ENCODE measurements at regions of chr7 and their contacts with region 1.

Region 1: DNA sequence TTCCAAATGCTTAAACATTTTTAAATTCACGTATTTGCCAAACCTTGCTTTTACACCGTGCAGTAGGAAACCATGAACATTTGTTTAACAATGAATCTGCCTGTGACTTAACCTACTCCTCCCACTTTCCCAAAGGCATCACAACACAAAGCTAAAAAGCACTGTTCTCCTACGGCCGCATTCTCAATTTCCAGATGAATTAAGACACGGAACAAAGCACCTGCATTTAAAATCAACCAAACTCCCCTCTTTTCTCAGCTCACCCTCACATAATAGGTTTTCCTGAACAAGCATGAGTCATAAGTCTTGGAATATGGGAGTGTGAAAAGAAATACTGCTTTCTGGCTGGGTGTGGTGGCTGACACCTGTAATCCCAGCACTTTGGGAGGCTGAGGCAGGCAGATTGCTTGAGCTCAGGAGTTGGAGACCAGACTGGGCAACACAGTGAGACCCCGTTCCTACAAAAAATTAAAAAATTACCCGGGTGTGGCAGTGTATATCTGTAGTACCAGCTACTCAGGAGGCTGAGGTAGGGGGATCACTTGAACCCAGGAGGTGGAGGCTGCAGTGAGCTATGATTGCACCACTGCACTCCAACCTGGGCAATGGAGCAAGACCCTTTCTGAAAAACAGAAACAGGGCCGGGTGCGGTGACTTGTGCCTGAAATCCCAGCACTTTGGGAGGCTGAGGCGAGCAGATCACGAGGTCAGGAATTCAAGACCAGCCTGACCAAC is 51.7 kb upstream of the CYTH3 start:
- DNase-seq: no peak
- ATAC-seq: no peak
- H3K4me3 ChIP-seq: no peak overlapping the region
- H3K4me3 Mint-ChIP-seq: no peak overlapping the region
- H3K27ac ChIP-seq: no peak overlapping the region
- H3K27ac Mint-ChIP-seq: no peak overlapping the region
- H3K4me1 ChIP-seq: peaks cover 0 to 3% of the 10 kb centered on the region in 2 donors
- H3K4me1 Mint-ChIP-seq: peaks cover 4% of the 10 kb centered on the region
- H3K27me3 ChIP-seq: no peaks in the 10 kb centered on the region
- H3K27me3 Mint-ChIP-seq: no peaks in the 10 kb centered on the region
- CTCF ChIP-seq: no peak

Region 2: GRCh38 chr7:5854738-5855137 is 469.4 kb before region 1 on chr7:
- CTCF ChIA-PET with region 1: interaction called, 10 read pairs
- POLR2A ChIA-PET with region 1: no interaction called
- intact Hi-C with region 1: no loop called
- DNase-seq: no peak
- ATAC-seq: no peak
- H3K4me3 ChIP-seq: no peak overlapping the region
- H3K4me3 Mint-ChIP-seq: no peak overlapping the region
- H3K27ac ChIP-seq: no peak overlapping the region
- H3K27ac Mint-ChIP-seq: no peak overlapping the region
- H3K4me1 ChIP-seq: peaks cover 0 to 5% of the 10 kb centered on the region in 2 donors
- H3K4me1 Mint-ChIP-seq: peaks cover 3% of the 10 kb centered on the region
- H3K27me3 ChIP-seq: no peaks in the 10 kb centered on the region
- H3K27me3 Mint-ChIP-seq: no peaks in the 10 kb centered on the region
- CTCF ChIP-seq: no peak

Region 3: GRCh38 chr7:6106140-6106904 is 217.8 kb before region 1 on chr7:
- CTCF ChIA-PET with region 1: interaction called, 7 read pairs
- POLR2A ChIA-PET with region 1: no interaction called
- intact Hi-C with region 1: loop called (anchors 2 kb)
- DNase-seq: peak; percentile 51
- ATAC-seq: no peak
- H3K4me3 ChIP-seq: peak overlapping the region; percentile 58 to 76 (median 70)
- H3K4me3 Mint-ChIP-seq: peak overlapping the region; percentile 88
- H3K27ac ChIP-seq: peak overlapping the region; percentile 60 to 71
- H3K27ac Mint-ChIP-seq: peak overlapping the region; percentile 86
- H3K4me1 ChIP-seq: peaks cover 13 to 24% of the 10 kb centered on the region in 2 donors
- H3K4me1 Mint-ChIP-seq: peaks cover 31% of the 10 kb centered on the region
- H3K27me3 ChIP-seq: no peaks in the 10 kb centered on the region
- H3K27me3 Mint-ChIP-seq: no peaks in the 10 kb centered on the region
- CTCF ChIP-seq: peak; percentile 18

Region 4: GRCh38 chr7:6160191-6160623 is 163.9 kb before region 1 on chr7:
- CTCF ChIA-PET with region 1: interaction called, 17 read pairs
- POLR2A ChIA-PET with region 1: no interaction called
- intact Hi-C with region 1: loop called (anchors 2 kb)
- DNase-seq: no peak
- ATAC-seq: no peak
- H3K4me3 ChIP-seq: no peak overlapping the region
- H3K4me3 Mint-ChIP-seq: no peak overlapping the region
- H3K27ac ChIP-seq: no peak overlapping the region
- H3K27ac Mint-ChIP-seq: no peak overlapping the region
- H3K4me1 ChIP-seq: no peaks in the 10 kb centered on the region
- H3K4me1 Mint-ChIP-seq: no peaks in the 10 kb centered on the region
- H3K27me3 ChIP-seq: no peaks in the 10 kb centered on the region
- H3K27me3 Mint-ChIP-seq: no peaks in the 10 kb centered on the region
- CTCF ChIP-seq: no peak

Region 5: GRCh38 chr7:6294839-6295238 is 29.3 kb before region 1 on chr7:
- CTCF ChIA-PET with region 1: no interaction called
- POLR2A ChIA-PET with region 1: no interaction called
- intact Hi-C with region 1: no loop called
- DNase-seq: no peak
- ATAC-seq: no peak
- H3K4me3 ChIP-seq: no peak overlapping the region
- H3K4me3 Mint-ChIP-seq: no peak overlapping the region
- H3K27ac ChIP-seq: no peak overlapping the region
- H3K27ac Mint-ChIP-seq: no peak overlapping the region
- H3K4me1 ChIP-seq: no peaks in the 10 kb centered on the region
- H3K4me1 Mint-ChIP-seq: no peaks in the 10 kb centered on the region
- H3K27me3 ChIP-seq: no peaks in the 10 kb centered on the region
- H3K27me3 Mint-ChIP-seq: peaks cover 5% of the 10 kb centered on the region
- CTCF ChIP-seq: no peak

Region 6: GRCh38 chr7:6344278-6344677 is 20.1 kb after region 1 on chr7:
- CTCF ChIA-PET with region 1: interaction called, 12 read pairs
- POLR2A ChIA-PET with region 1: no interaction called
- intact Hi-C with region 1: no loop called
- DNase-seq: no peak
- ATAC-seq: no peak
- H3K4me3 ChIP-seq: no peak overlapping the region
- H3K4me3 Mint-ChIP-seq: no peak overlapping the region
- H3K27ac ChIP-seq: peak overlapping the region in 1 of 2 donors; percentile 23
- H3K27ac Mint-ChIP-seq: no peak overlapping the region
- H3K4me1 ChIP-seq: peaks cover 0 to 12% of the 10 kb centered on the region in 2 donors
- H3K4me1 Mint-ChIP-seq: peaks cover 24% of the 10 kb centered on the region
- H3K27me3 ChIP-seq: no peaks in the 10 kb centered on the region
- H3K27me3 Mint-ChIP-seq: no peaks in the 10 kb centered on the region
- CTCF ChIP-seq: no peak

Region 7: DNA sequence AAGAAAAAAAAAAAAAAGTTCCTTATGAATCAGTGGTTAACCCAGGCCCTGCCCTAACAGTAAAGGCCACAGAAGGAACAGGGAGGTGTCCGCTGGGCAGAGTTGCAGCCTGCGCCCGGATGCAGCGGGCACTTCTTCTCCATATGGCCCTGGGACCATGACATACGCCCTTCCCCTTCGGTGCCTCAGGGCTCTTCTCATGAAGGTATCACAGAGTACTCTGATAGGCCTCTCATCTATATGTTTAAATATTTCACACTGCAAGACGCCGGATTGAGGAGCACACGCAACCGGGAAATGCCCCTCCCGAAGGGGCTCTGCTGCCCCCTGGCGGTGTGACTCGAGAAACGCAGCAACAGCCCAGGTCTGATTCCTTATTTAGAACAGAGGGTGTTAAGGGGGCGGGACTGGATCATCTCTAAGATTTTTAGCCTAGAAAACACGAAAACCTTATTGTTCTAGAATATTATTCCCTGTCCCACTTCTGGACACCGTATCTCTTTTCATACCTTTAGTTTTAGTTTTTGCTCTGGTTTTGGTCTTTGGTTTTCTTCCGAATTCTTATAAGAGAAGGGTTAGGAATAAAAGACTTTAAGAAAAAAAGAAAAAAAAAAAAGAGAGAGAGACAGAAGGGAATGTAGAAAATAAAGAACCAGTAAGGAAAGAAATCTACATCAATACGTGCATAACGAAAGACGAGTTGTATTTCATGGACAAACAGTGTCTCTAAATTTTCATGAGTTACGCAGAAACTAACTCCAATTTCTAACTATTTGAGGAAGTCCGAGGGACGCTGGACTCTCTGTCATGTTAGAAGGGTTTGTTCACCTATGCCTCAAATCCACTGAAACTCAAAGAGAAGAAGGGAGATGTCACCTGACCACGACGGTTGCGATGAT is 111.6 kb after region 1 on chr7:
- CTCF ChIA-PET with region 1: interaction called, 21 read pairs
- POLR2A ChIA-PET with region 1: no interaction called
- intact Hi-C with region 1: loop called (anchors 1 kb)
- DNase-seq: peak; percentile 89
- ATAC-seq: peak; percentile 95
- H3K4me3 ChIP-seq: peak overlapping the region; percentile 20 to 57 (median 50)
- H3K4me3 Mint-ChIP-seq: peak overlapping the region; percentile 72
- H3K27ac ChIP-seq: peak overlapping the region; percentile 14 to 70
- H3K27ac Mint-ChIP-seq: peak overlapping the region; percentile 79
- H3K4me1 ChIP-seq: peaks cover 26 to 40% of the 10 kb centered on the region in 2 donors
- H3K4me1 Mint-ChIP-seq: peaks cover 39% of the 10 kb centered on the region
- H3K27me3 ChIP-seq: no peaks in the 10 kb centered on the region
- H3K27me3 Mint-ChIP-seq: no peaks in the 10 kb centered on the region
- CTCF ChIP-seq: peak; percentile 92

Region 8: DNA sequence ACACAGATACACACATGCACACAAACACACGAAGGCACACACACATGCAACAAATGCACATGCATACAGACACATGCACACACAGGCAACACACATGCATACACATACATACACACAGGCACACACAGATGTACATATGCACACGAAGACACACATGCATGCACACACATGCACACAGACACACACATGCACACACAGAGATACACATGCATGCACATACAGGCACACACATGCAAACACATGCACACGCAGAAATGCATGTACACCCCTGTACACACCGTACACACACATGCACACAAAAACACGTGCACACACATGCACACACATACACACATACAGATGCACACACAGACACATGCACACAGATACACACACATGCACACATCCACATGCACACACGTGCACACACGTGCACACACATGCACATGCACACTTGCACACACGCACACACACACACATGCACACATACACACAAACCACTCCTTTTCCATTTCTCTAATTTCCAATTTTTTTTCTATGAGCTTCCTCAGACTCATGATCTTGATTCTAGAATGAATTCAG is 565.2 kb after region 1 on chr7:
- CTCF ChIA-PET with region 1: no interaction called
- POLR2A ChIA-PET with region 1: no interaction called
- intact Hi-C with region 1: no loop called
- DNase-seq: no peak
- ATAC-seq: no peak
- H3K4me3 ChIP-seq: no peak overlapping the region
- H3K4me3 Mint-ChIP-seq: no peak overlapping the region
- H3K27ac ChIP-seq: no peak overlapping the region
- H3K27ac Mint-ChIP-seq: no peak overlapping the region
- H3K4me1 ChIP-seq: no peaks in the 10 kb centered on the region
- H3K4me1 Mint-ChIP-seq: no peaks in the 10 kb centered on the region
- H3K27me3 ChIP-seq: no peaks in the 10 kb centered on the region
- H3K27me3 Mint-ChIP-seq: peaks cover 11% of the 10 kb centered on the region
- CTCF ChIP-seq: no peak

Measured in B cell (primary cell).